ENCODE measurements at regions of chr4 and their contacts with region 1.

Region 1: DNA sequence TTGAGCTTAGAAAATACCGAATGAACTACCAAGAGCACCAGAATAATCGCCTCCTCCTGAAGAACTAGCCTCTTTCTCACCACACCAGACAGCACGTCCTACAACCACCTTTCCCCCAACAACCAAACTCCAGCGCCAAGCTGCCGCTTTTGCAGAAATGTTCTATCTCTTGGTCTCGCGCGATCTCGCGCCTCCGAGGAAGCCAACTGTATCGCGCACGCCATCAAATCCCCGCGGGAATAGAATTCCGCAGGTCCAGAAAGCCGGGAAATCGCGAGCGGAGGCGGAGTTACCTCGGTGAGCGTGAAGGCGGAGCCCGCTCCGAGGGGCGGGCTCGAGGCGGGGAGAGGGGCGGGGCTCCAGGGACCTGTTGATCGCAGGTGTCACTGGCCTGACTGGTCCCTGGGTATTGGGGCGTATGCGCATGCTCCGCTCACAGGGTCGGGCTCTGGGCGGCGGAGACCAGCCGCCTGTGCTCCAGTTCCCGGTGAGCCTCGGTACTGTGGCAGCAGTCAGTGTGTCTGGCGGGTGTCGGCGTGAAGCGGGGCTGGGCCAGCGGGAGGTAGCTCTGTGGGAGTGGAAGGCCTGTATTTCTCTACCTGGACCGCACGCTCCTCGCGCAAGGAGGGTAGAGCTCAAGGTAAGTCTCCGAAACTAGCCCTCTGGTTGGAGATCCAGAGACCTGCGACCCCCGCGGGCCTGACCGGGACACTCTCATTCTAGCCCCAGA is at the start of gene USP53:
- DNase-seq: peak; percentile 87 to 97
- ATAC-seq: peak; percentile 91 to 93
- H3K4me3 ChIP-seq: peak within 1 kb of the TSS; percentile 82
- H3K27ac ChIP-seq: peak within 1 kb of the TSS; percentile 95 to 97
- H3K4me1 ChIP-seq: peaks cover 51% of the 10 kb centered on the region
- CTCF ChIP-seq: no peak
- EP300 ChIP-seq: no peak
- POLR2A ChIP-seq: peak; percentile 76
- RAD21 ChIP-seq: no peak
- polyA plus RNA-seq, gene USP53: 37.3 and 50.7 TPM in 2 replicates

Region 2: GRCh38 chr4:119041951-119042560 is 170.3 kb before region 1 on chr4:
- CTCF ChIA-PET with region 1: interaction called, 12 read pairs
- POLR2A ChIA-PET with region 1: interaction called, 13 read pairs
- DNase-seq: peak; percentile 56 to 81
- ATAC-seq: peak; percentile 92 to 93
- H3K4me3 ChIP-seq: no peak overlapping the region
- H3K27ac ChIP-seq: peak overlapping the region; percentile 78 to 80; a peak in 5 of 6 replicates
- H3K4me1 ChIP-seq: peaks cover 63% of the 10 kb centered on the region
- CTCF ChIP-seq: peak; percentile 70
- EP300 ChIP-seq: no peak
- POLR2A ChIP-seq: no peak
- RAD21 ChIP-seq: peak; percentile 77 to 82

Region 3: DNA sequence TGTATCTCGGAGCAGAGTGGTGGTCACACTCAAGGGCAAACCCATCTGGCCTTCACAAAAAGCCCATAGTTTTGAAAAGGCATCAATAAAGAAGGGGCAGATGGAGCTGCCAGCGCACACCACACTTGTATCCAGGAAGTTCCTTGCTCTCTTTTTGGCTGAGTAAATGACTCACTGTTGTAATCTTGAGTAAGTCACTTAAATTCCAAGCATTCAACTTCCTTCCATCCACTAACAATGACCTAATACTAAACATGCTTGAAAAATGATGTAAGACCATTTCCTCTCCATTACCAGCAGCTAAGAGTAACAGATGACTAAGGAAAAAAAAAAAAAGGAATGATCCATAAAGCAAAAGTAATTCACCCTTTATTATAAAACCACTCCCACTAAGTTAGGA is 109.1 kb before region 1 on chr4:
- CTCF ChIA-PET with region 1: interaction called, 4 read pairs
- POLR2A ChIA-PET with region 1: interaction called, 56 read pairs
- DNase-seq: peak; percentile 69 to 96
- ATAC-seq: peak; percentile 97 to 99
- H3K4me3 ChIP-seq: no peak overlapping the region
- H3K27ac ChIP-seq: peak overlapping the region; percentile 91 to 99
- H3K4me1 ChIP-seq: peaks cover 64% of the 10 kb centered on the region
- CTCF ChIP-seq: no peak
- EP300 ChIP-seq: peak; percentile 66 to 85; a peak in 4 of 5 replicates
- POLR2A ChIP-seq: no peak
- RAD21 ChIP-seq: no peak

Region 4: GRCh38 chr4:119138046-119138445 is 74.4 kb before region 1 on chr4:
- CTCF ChIA-PET with region 1: interaction called, 3 read pairs
- POLR2A ChIA-PET with region 1: interaction called, 12 read pairs
- DNase-seq: no peak
- ATAC-seq: no peak
- H3K4me3 ChIP-seq: no peak overlapping the region
- H3K27ac ChIP-seq: no peak overlapping the region
- H3K4me1 ChIP-seq: peaks cover 32% of the 10 kb centered on the region; the same call in 2 of the 3 replicates
- CTCF ChIP-seq: no peak
- EP300 ChIP-seq: no peak
- POLR2A ChIP-seq: no peak
- RAD21 ChIP-seq: no peak

Measured in A549 (cell line).